ENCODE measurements at regions of chr14 and their contacts with region 1.

Region 1: GRCh38 chr14:104876251-104876699 is 11.2 kb downstream of the CEP170B start:
- DNase-seq: peak; percentile 21
- H3K4me3 Mint-ChIP-seq: no peak overlapping the region
- H3K27ac Mint-ChIP-seq: no peak overlapping the region
- H3K4me1 Mint-ChIP-seq: peaks cover 7% of the 10 kb centered on the region
- H3K27me3 Mint-ChIP-seq: no peaks in the 10 kb centered on the region

Region 2: GRCh38 chr14:104865644-104866441 is 10.4 kb before region 1 on chr14:
- intact Hi-C with region 1: loop called (anchors 1 kb)
- DNase-seq: no peak
- H3K4me3 Mint-ChIP-seq: peak overlapping the region; percentile 70
- H3K27ac Mint-ChIP-seq: no peak overlapping the region
- H3K4me1 Mint-ChIP-seq: peaks cover 7% of the 10 kb centered on the region
- H3K27me3 Mint-ChIP-seq: peaks cover 12% of the 10 kb centered on the region

Measured in activated T-helper 1 cell treated with anti-CD3 and anti-CD28 coated beads, Interleukin-12 subunit alpha, Interleukin-12 subunit beta, Interleukin-2, Interleukin-4 antibody, amounts not matched to agents 30 ng/mL and 10 ng/mL and 1 ng/mL, durations not matched to agents 14 hours and 24 hours and 36 hours (primary cell).